ENCODE measurements at regions of chr6 and their contacts with region 1.

Region 1: DNA sequence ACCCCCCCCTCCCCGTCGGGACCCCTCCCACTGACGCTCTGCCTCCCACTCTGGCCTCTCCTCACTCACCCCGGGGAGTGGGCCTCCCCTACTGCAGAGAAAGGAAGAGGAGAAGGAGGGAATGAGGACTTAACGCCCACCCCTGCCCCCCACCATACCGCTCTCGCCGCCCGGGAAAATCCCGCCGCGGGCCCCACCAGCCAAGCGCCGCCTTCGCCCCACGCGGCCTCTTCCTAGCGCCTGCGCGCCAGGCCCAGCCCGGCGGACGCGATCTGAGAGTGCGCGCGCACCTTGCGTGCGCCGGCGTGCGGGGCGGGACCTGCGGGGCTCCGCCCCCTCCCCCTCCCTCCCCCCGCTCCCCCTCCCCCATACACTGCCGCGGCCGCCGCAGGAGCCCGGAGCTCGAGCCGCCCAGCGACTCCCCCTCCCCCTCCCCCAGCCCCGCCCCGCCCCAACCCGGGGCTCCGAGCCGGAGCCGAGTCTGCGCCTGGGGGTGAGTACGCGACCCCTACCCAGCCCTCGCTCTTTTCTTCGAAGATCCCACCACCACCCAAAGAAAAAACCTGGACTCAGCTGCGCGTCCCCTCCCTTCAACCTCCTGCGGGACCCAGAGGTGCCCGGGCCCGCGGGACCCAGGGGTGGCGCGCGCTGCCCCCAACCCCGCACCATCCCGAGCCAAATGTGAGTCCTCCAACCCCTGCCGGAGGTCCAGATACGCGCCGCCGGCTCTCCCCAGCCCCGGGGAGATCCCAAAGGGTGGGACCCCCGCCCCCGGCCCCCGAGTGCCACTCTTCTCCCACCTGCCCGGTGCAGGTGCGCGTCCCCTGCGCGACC is at the starts of genes MRPL14 and TMEM63B:
- DNase-seq: peak; percentile 86
- H3K4me3 Mint-ChIP-seq: peak within 1 kb of the TSS; percentile 88
- H3K27ac Mint-ChIP-seq: peak within 1 kb of the TSS; percentile 93
- H3K4me1 Mint-ChIP-seq: peaks cover 41% of the 10 kb centered on the region
- H3K27me3 Mint-ChIP-seq: no peaks in the 10 kb centered on the region
- total RNA-seq, gene MRPL14: 40.9 to 41.0 TPM
- total RNA-seq, gene TMEM63B: 7.8 to 8.3 TPM

Region 2: GRCh38 chr6:43851204-43851865 is 276.1 kb before region 1 on chr6:
- CTCF ChIA-PET with region 1: no interaction called
- intact Hi-C with region 1: no loop called
- DNase-seq: no peak
- H3K4me3 Mint-ChIP-seq: no peak overlapping the region
- H3K27ac Mint-ChIP-seq: no peak overlapping the region
- H3K4me1 Mint-ChIP-seq: no peaks in the 10 kb centered on the region
- H3K27me3 Mint-ChIP-seq: no peaks in the 10 kb centered on the region

Region 3: GRCh38 chr6:44151348-44152108 is 24.1 kb after region 1 on chr6:
- CTCF ChIA-PET with region 1: interaction called, 5 read pairs
- intact Hi-C with region 1: loop called (anchors 1 kb)
- DNase-seq: peak; percentile 81
- H3K4me3 Mint-ChIP-seq: no peak overlapping the region
- H3K27ac Mint-ChIP-seq: no peak overlapping the region
- H3K4me1 Mint-ChIP-seq: no peaks in the 10 kb centered on the region
- H3K27me3 Mint-ChIP-seq: no peaks in the 10 kb centered on the region